Astrocyte of the cerebellum (primary cell): ENCODE measurements at regions of chrX and their contacts with region 1.

Region 1: GRCh38 chrX:76407795-76408194 is 19.7 kb upstream of the MAGEE1 start:
- DNase-seq: no peak
- H3K4me3 ChIP-seq: no peak overlapping the region
- CTCF ChIP-seq: no peak

Region 2: DNA sequence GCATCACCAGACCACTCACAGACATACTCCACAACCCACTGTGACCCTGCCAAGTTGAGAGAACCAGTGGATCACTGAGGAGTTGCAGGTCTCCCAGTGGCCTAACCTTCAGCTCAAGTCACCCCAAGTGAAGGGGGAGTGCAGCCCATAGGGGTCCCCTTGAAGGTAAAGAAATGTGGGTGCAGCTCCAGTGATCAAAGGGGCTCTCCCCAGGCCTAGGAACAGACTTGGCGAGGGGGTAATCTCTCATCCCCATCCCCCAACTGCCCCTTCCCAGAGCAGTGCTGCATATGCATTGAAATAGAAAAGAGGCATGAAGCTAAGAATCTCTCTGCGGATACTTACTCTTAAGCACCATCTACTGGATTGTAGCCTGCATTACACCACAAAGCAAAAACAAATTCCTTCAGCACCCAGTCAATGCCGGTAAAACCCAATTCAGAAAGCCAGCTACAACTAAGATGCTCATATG is 46.7 kb after region 1 on chrX:
- in situ Hi-C with region 1: loop called (anchors 5 kb)
- DNase-seq: no peak
- H3K4me3 ChIP-seq: no peak overlapping the region
- CTCF ChIP-seq: peak; percentile 57